ENCODE measurements at regions of chr20 and their contacts with region 1.

Region 1: DNA sequence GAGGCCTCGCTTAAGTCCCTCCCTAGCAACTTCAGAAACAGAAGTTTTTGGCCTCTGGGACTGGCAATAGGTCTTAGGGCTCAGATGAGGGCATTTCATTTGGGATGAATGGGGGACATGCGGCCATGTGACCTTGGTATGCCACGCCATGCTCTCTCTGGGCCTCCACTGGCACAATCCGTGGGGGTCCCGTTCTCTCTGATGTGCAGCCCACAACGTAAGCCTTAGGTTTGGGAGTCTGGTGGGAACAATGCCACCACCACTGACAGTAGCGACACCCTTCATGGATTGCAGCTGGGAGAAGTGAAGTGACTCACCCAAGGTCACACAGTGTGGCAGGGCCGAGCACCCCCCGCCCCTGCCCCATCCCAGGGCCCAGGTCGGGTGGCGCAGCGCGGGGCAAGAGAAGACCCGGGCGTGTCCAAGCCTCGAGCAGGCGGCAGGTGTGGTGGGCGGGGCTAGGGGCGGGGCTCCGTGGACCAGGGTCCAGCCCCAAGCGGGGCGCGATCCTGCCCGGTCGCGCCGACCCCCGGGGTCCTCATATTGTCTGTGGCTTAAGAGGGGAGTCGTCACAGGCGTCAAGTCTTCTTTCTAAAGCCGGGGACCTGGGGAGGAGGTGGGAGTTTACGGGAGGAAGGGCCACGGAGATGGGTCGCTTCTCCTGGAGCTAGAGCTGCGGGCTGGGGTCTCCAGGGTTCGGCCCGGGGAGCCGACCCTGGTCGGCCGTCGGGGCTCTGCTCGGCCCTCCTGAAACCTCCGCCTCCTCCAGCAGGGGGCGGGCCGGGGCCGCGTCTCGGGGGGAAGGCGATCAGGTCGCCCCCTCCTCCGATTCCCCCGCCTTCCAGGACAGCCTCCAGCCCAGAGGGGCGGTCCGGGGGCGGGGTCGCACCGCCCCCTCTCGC is 698 bp upstream of the CEBPB start:
- DNase-seq: peak; percentile 90 to 97 (median 97)
- ATAC-seq: peak; percentile 70 to 83
- H3K4me3 ChIP-seq: peak overlapping the region; percentile 64
- H3K27ac ChIP-seq: peak overlapping the region; percentile 25
- H3K4me1 ChIP-seq: peaks cover 8% of the 10 kb centered on the region
- H3K27me3 ChIP-seq: no peaks in the 10 kb centered on the region

Region 2: GRCh38 chr20:50242853-50243609 is 53.1 kb after region 1 on chr20:
- intact Hi-C with region 1: no loop called
- DNase-seq: peak in 1 of 3 donors; percentile 70
- ATAC-seq: peak in 1 of 2 donors; percentile 44
- H3K4me3 ChIP-seq: no peak overlapping the region
- H3K27ac ChIP-seq: no peak overlapping the region
- H3K4me1 ChIP-seq: no peaks in the 10 kb centered on the region
- H3K27me3 ChIP-seq: no peaks in the 10 kb centered on the region

Region 3: DNA sequence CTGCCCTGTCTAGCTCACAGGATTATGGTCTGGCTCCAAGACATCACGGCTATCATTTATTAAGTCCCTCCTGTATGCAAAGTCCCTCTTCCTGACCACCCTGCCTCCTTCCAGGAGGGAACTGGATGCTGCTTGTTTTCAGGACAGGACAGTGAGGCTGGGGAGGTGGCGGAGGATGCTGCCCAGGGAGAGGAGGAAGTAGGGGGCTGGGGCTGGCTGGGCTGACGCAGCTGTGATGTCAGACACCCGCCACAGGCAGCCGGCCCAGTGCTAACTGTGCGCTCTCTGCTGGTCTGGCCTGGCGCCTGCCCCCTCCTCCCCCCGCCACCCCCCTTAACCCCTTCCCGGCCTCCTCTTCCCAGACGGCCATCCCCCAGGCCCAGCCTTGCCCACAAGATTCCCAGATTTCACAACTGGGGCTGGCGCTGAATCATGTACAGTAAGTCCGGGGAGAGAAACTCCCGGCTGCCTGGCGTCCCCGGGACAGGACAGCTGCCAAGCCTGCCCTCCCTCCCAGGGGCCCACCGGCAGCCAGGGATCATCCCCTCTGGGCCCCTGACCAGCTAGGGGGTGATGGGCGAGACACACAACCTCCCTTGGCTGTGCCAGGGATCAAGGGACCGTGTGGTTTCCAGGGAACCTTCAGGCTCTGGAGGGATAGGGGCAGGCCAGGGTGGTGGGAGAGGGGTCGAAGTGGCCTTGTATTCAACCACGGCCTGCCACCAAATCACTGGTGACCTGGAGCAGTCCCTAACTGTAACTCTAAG is 118.8 kb after region 1 on chr20:
- intact Hi-C with region 1: loop called in 2 of 4 experiments (anchors 10 kb)
- DNase-seq: peak; percentile 94 to 97 (median 96)
- ATAC-seq: peak; percentile 76 to 85
- H3K4me3 ChIP-seq: no peak overlapping the region
- H3K27ac ChIP-seq: peak overlapping the region; percentile 77
- H3K4me1 ChIP-seq: peaks cover 22% of the 10 kb centered on the region
- H3K27me3 ChIP-seq: no peaks in the 10 kb centered on the region

Region 4: DNA sequence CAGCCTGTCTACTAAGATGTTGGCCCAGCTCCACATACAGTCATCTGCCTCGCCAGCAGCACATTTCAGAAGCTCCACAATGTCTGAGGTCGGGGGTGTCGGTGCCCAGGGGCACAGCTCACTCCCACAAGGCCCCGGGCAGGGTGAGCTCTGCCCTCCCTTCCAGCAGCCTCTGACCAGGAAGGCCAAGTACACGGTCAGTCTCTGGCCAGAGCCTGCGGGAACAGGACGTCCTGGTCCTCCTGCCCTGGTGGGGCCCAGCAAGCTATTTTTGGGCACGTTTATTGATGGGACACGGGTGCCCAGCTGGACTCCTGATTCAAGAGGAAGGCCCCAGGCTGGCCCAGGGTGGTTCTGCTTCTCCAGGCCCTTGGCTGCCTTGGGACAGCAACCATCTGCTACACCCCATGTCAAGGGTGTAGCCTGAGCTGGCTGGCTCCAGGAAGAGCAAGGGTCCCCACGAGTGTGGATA is 205.4 kb after region 1 on chr20:
- intact Hi-C with region 1: loop called in 1 of 4 experiments (anchors 5 kb)
- DNase-seq: peak; percentile 83 to 93 (median 90)
- ATAC-seq: peak; percentile 86 to 89
- H3K4me3 ChIP-seq: no peak overlapping the region
- H3K27ac ChIP-seq: peak overlapping the region; percentile 94
- H3K4me1 ChIP-seq: peaks cover 16% of the 10 kb centered on the region
- H3K27me3 ChIP-seq: no peaks in the 10 kb centered on the region

Region 5: GRCh38 chr20:50569864-50570836 is 380.2 kb after region 1 on chr20:
- intact Hi-C with region 1: loop called (anchors 5 kb)
- DNase-seq: no peak
- ATAC-seq: peak; percentile 28 to 34
- H3K4me3 ChIP-seq: no peak overlapping the region
- H3K27ac ChIP-seq: no peak overlapping the region
- H3K4me1 ChIP-seq: peaks cover 16% of the 10 kb centered on the region
- H3K27me3 ChIP-seq: no peaks in the 10 kb centered on the region

Region 6: DNA sequence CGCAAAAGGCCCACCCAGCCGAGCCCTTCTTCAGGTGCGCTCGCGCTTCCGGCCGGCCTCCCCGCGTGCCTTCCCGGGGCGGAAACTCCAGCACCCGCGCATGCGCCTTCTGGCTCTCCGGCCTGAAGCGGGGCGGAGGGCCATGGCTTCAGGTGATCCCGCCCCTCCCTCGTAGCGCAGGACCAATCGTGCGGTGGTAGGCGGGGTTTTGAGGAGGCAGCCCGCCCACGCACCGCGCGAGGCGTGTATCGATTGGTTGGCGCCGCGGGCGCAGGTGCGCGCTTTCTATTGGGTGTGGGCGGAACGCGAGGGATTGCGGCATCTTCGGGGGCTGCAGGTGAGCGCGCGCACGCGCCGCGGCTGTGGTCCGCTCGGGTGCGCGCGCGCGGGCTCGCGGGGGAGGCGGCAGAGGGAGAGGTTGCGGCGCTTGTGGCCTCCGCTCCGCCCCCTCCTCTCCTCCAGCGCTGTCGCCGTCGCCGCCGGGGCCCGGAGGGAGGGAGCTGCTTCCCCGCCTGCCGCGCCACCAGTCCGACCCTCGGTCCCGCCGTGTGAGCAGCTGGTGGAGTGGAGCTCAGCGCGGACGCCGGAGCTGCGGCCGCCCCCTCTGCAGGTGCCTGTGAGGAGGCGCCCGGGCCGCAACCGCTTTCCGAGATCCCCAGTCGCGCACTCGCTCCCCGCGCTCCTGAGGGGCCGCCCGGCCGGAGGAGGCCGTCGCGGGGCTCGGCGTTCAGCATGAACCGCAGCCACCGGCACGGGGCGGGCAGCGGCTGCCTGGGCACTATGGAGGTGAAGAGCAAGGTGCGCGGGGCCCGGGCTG is 541.3 kb after region 1 on chr20 and contains the start of gene PARD6B:
- intact Hi-C with region 1: loop called in 1 of 4 experiments (anchors 10 kb)
- DNase-seq: peak; percentile 94 to 98 (median 98)
- ATAC-seq: peak; percentile 98
- H3K4me3 ChIP-seq: peak within 1 kb of the TSS; percentile 63
- H3K27ac ChIP-seq: peak within 1 kb of the TSS; percentile 69
- H3K4me1 ChIP-seq: no peaks in the 10 kb centered on the region
- H3K27me3 ChIP-seq: no peaks in the 10 kb centered on the region
- total RNA-seq, gene PARD6B: 2.5 to 5.2 (median 3.5) TPM